ENCODE measurements at regions of chr6 and their contacts with region 1.

Region 1: DNA sequence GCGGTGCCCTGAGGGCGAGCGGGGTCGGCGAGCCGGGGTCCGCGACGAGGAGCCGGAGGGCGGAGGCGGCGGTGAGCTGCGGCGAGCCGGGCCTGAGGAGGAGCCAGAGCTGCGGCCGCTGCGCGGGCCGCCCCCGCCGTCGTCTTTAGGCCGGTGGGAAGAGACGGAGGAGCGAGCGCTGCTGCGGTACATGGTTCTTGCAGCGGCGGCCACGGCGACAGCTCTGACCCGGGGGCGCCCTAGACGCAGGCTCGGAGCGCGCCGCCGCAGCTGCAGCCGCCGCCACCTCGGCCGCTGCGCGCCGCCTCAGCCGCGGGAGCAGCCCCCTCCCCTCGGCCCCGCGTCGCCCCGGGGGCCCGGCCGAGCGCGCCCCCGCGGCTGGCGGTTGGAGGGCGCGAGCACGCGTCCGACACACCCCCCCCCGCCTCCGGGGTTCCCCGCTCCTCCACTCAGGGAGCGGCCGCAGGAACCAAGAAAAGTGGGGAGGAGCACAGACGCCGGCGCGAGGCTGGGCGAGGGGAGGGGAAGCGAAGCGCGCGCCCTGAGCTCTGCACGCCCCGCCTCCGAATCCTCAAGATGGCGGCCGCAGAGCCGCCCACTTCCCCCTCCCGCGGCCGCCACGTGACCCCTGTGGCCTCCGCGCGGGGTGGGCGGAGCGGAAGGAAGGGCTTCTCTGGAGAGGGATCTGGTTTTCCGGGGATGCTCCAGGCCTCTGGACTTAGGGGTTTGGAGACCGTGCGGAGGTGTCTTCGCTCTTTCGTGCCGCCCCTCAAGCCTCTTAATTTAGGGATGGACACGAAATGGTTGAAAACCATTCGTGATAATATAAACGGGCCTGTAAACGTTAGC is at the start of gene ZNF318:
- DNase-seq: peak; percentile 98
- H3K4me3 ChIP-seq: peak within 1 kb of the TSS; percentile 55 to 92 (median 76)
- H3K27ac ChIP-seq: peak within 1 kb of the TSS; percentile 83
- H3K4me1 ChIP-seq: peaks cover 32% of the 10 kb centered on the region
- H3K27me3 ChIP-seq: no peaks in the 10 kb centered on the region
- CTCF ChIP-seq: no peak
- total RNA-seq, gene ZNF318: 14.8 to 15.9 TPM

Region 2: GRCh38 chr6:43053545-43054205 is 315.7 kb before region 1 on chr6 and contains the start of gene CUL7:
- CTCF ChIA-PET with region 1: interaction called, 10 read pairs
- dilution Hi-C with region 1: no loop called
- in situ Hi-C with region 1: no loop called
- intact Hi-C with region 1: no loop called
- DNase-seq: peak; percentile 94
- H3K4me3 ChIP-seq: peak within 1 kb of the TSS; percentile 90 to 93 (median 92)
- H3K27ac ChIP-seq: peak within 1 kb of the TSS; percentile 74
- H3K4me1 ChIP-seq: peaks cover 26% of the 10 kb centered on the region
- H3K27me3 ChIP-seq: no peaks in the 10 kb centered on the region
- CTCF ChIP-seq: no peak
- total RNA-seq, gene CUL7: 21.5 to 31.5 TPM

Region 3: DNA sequence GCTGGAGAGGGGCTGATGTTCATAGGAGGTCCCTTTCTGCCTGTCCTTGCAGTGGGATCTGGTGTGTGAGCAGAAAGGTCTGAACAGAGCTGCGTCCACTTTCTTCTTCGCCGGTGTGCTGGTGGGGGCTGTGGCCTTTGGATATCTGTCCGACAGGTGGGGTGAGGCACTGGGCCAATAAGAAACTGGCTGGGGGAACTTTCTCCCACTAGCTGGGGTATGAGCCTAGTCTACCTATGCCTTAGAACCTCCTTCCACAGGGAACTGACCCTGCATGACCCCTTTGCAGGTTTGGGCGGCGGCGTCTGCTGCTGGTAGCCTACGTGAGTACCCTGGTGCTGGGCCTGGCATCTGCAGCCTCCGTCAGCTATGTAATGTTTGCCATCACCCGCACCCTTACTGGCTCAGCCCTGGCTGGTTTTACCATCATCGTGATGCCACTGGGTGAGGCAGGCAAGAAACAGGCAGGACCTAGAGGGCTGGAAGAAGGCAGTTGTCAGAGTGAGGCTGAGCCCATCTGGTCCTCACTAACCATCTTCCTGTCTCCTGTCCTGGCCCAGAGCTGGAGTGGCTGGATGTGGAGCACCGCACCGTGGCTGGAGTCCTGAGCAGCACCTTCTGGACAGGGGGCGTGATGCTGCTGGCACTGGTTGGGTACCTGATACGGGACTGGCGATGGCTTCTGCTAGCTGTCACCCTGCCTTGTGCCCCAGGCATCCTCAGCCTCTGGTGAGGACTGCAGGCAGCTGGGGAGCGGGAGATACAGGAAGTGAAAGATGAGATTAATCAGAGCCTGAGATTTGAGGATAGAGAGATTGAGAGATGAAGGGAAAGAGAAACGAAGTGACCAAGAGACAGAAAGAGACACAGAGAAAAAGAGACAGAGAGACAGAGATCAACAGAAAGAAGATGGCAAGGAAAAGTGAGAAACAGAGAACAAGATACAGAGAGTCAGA is 69.8 kb before region 1 on chr6:
- CTCF ChIA-PET with region 1: no interaction called
- dilution Hi-C with region 1: loop called (anchors 5 kb)
- in situ Hi-C with region 1: no loop called
- intact Hi-C with region 1: no loop called
- DNase-seq: no peak
- H3K4me3 ChIP-seq: no peak overlapping the region
- H3K27ac ChIP-seq: no peak overlapping the region
- H3K4me1 ChIP-seq: no peaks in the 10 kb centered on the region
- H3K27me3 ChIP-seq: no peaks in the 10 kb centered on the region
- CTCF ChIP-seq: no peak

Region 4: GRCh38 chr6:43355862-43356590 is 13.4 kb before region 1 on chr6:
- CTCF ChIA-PET with region 1: no interaction called
- dilution Hi-C with region 1: no loop called
- in situ Hi-C with region 1: no loop called
- intact Hi-C with region 1: loop called (anchors 1 kb)
- DNase-seq: no peak
- H3K4me3 ChIP-seq: no peak overlapping the region
- H3K27ac ChIP-seq: no peak overlapping the region
- H3K4me1 ChIP-seq: peaks cover 15% of the 10 kb centered on the region
- H3K27me3 ChIP-seq: no peaks in the 10 kb centered on the region
- CTCF ChIP-seq: peak; percentile 32 to 49

Region 5: GRCh38 chr6:43427406-43428111 is 58.2 kb after region 1 on chr6 and contains the start of gene ABCC10:
- CTCF ChIA-PET with region 1: no interaction called
- dilution Hi-C with region 1: no loop called
- in situ Hi-C with region 1: no loop called
- intact Hi-C with region 1: loop called (anchors 2 kb)
- DNase-seq: peak; percentile 95
- H3K4me3 ChIP-seq: peak within 1 kb of the TSS; percentile 64 to 100 (median 91)
- H3K27ac ChIP-seq: peak within 1 kb of the TSS; percentile 71
- H3K4me1 ChIP-seq: peaks cover 11% of the 10 kb centered on the region
- H3K27me3 ChIP-seq: no peaks in the 10 kb centered on the region
- CTCF ChIP-seq: peak in 1 of 2 donors; percentile 49
- total RNA-seq, gene ABCC10: 32.0 to 39.9 TPM

Measured in mammary epithelial cell (primary cell).